OCI-LY7 (cell line): ENCODE measurements at regions of chr3 and their contacts with region 1.

Region 1: DNA sequence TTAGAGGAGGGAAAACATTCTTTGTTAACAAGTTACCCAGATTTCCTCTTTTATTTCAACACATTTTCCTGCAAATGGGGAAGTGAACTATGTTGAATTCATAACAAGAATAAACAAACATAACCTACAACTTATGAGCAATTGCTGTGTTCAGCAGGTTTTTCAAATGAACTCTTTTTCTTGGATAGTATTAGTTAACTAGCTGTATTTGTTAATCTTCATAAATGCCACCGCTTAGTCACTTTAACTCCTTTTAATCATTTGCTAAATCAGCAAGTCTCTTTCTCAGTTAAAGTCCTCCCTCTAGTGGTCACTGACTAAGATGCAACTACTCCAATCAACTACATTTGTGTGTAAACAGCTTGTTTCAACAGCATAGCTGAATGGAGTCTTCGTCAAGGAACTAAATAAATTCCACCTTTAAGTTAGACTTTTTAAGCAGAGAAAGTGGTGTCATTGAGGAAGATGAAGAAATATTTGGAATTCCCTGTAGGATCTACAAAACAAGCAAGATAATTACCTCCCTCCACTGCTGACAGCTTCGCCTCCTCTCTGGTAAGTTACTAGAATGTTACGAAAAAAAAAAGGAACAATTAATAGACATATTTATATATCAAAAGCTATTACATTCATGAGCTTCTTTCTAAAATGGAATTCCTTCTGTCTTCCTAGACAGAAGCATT is 1122.0 kb downstream of the ROBO1 start:
- DNase-seq: peak; percentile 56
- H3K4me3 ChIP-seq: no peak overlapping the region
- H3K27ac ChIP-seq: no peak overlapping the region
- H3K4me1 ChIP-seq: no peaks in the 10 kb centered on the region
- CTCF ChIP-seq: peak; percentile 96

Region 2: GRCh38 chr3:77320514-77320913 is 1325.3 kb before region 1 on chr3:
- CTCF ChIA-PET with region 1: no interaction called
- POLR2A ChIA-PET with region 1: no interaction called
- intact Hi-C with region 1: loop called (anchors 10 kb)
- DNase-seq: peak; percentile 37
- H3K4me3 ChIP-seq: no peak overlapping the region
- H3K27ac ChIP-seq: no peak overlapping the region
- H3K4me1 ChIP-seq: no peaks in the 10 kb centered on the region
- CTCF ChIP-seq: peak; percentile 86

Region 3: DNA sequence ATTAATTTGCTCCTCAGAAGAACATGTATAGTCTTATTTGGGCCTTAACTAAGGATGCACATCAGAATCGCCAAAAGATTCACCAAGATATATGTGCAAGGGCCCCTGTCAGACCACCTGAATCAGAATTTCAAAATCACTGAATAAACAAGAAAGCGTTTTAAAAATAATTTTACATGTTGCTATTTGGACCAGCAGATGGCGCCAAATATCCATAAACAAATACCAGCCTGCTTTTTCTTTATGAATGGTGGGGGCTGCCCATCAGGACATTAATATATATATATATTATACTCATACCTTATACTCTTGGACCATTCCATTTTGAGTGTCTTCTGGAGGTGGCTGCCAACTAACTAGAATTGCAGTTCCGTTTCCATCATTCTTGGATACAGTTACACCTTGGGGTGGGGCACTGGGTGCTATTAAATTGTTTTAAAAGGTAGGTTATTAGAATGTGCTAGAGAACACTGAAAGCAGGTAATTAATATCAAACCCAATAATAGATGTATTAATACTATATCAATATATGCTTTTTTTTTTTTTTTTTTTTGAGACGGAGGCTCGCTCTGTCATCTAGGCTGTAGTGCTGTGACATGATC is 13.7 kb after region 1 on chr3:
- CTCF ChIA-PET with region 1: no interaction called
- POLR2A ChIA-PET with region 1: no interaction called
- intact Hi-C with region 1: no loop called
- DNase-seq: peak; percentile 54
- H3K4me3 ChIP-seq: no peak overlapping the region
- H3K27ac ChIP-seq: no peak overlapping the region
- H3K4me1 ChIP-seq: no peaks in the 10 kb centered on the region
- CTCF ChIP-seq: peak; percentile 81